ENCODE measurements at regions of chr15 and their contacts with region 1.

Region 1: GRCh38 chr15:74053941-74054529 is 28.3 kb downstream of the GOLGA6A start:
- DNase-seq: peak; percentile 90
- H3K4me3 ChIP-seq: peak overlapping the region in 1 of 8 donors; percentile 44
- H3K27ac ChIP-seq: no peak overlapping the region
- H3K4me1 ChIP-seq: peaks cover 3 to 38% (median 18%) of the 10 kb centered on the region in 6 donors
- H3K27me3 ChIP-seq: no peaks in the 10 kb centered on the region
- CTCF ChIP-seq: peak in 10 of 11 experiments; percentile 12 to 81 (median 49)
- POLR2A ChIP-seq: no peak

Region 2: GRCh38 chr15:74322181-74323076 is 268.4 kb after region 1 on chr15:
- intact Hi-C with region 1: loop called (anchors 5 kb)
- DNase-seq: peak; percentile 89
- H3K4me3 ChIP-seq: no peak overlapping the region
- H3K27ac ChIP-seq: no peak overlapping the region
- H3K4me1 ChIP-seq: peaks cover 5 to 60% (median 20%) of the 10 kb centered on the region in 6 donors
- H3K27me3 ChIP-seq: no peaks in the 10 kb centered on the region
- CTCF ChIP-seq: peak; percentile 65 to 90 (median 82)
- POLR2A ChIP-seq: no peak

Measured in spleen (tissue), 13 donors.